Mucosa of descending colon (tissue), 3 donors: ENCODE measurements at regions of chr14 and their contacts with region 1.

Region 1: GRCh38 chr14:91286530-91286937 is 42.0 kb upstream of the GPR68 start:
- DNase-seq: peak in 2 of 3 donors; percentile 83 to 89
- ATAC-seq: peak; percentile 89
- H3K4me3 ChIP-seq: no peak overlapping the region
- H3K4me1 ChIP-seq: no peaks in the 10 kb centered on the region
- CTCF ChIP-seq: peak; percentile 75

Region 2: DNA sequence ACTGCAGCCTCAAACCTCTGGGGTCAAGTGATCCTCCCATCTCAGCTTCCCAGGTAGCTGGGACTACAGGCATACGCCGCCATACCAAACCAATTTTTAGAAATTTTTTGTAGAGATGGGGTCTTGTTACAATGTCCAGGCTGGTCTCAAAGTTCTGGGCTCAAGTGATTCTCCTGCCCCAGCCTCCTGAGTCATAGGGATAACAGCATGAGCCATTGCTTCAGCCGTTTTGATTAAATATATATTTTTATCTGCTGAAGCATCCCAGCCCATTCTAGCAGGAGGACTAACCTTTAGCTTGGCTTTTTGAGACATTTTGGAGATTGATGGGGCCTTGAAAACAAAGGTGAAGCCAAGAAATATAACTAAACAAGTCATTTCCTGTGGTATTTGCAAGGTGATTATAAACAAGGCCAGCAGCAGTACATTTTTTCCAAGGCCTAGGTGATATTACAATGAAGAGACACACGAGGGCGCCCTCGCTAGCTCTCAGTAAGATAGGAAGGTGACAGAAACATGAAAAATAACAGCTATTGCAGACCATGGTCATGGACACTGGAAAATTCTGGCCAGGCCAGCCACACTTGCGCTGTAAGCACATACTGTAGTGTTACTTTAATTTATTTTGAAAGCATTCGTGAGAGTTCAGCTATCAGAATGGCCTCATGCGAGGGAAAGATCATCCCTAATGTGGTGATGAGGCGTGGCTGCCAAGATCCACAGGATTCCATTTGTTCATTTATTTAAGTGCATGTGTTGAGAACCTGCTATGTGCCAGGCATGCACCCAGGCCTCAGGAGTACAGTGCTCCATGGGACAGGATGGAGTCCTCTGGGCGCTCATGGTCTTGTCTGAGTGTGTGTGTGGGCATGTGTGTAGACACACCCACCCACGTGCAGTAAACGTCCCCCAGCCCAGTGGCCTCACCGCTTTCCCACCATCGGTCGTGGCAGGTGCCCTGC is 109.2 kb before region 1 on chr14:
- intact Hi-C with region 1: loop called (anchors 5 kb)
- DNase-seq: peak in 1 of 3 donors; percentile 66
- ATAC-seq: peak; percentile 85
- H3K4me3 ChIP-seq: no peak overlapping the region
- H3K4me1 ChIP-seq: no peaks in the 10 kb centered on the region
- CTCF ChIP-seq: peak; percentile 52